ENCODE measurements at regions of chr10 and their contacts with region 1.

Region 1: DNA sequence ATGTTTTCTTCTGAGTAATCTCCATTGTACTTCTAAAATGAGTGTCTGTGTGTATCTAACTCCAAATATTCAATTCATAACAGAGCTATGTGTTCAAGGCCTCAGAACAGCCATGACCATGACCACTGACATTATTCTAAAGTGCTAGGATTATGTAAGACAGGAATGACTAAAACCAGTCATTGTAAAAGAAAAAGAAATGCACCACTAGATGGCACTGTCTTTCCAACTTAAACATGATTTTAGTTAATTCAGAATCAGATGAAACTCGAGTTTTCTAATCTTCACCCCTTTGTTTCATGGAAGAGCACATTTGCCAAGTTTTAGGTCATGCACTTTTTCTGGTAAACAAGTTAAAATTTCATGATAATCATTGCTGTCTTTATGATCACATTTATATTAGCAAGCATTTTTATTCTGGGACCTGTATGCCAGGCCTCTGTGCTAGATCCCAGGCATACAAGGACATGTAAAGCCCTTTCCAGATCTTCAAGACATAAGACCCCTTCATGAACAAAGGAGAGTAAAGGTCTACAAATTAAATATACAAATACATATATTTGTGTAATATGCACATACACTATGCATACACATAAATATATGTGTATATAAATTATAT is 26.1 kb upstream of the RSU1 start:
- DNase-seq: peak; percentile 75
- H3K4me3 Mint-ChIP-seq: no peak overlapping the region
- H3K27ac Mint-ChIP-seq: no peak overlapping the region
- H3K4me1 Mint-ChIP-seq: peaks cover 2% of the 10 kb centered on the region
- H3K27me3 Mint-ChIP-seq: peaks cover 11% of the 10 kb centered on the region

Region 2: GRCh38 chr10:16799621-16800020 is 43.7 kb before region 1 on chr10:
- intact Hi-C with region 1: no loop called
- DNase-seq: peak; percentile 58
- H3K4me3 Mint-ChIP-seq: no peak overlapping the region
- H3K27ac Mint-ChIP-seq: no peak overlapping the region
- H3K4me1 Mint-ChIP-seq: peaks cover 31% of the 10 kb centered on the region
- H3K27me3 Mint-ChIP-seq: no peaks in the 10 kb centered on the region

Region 3: DNA sequence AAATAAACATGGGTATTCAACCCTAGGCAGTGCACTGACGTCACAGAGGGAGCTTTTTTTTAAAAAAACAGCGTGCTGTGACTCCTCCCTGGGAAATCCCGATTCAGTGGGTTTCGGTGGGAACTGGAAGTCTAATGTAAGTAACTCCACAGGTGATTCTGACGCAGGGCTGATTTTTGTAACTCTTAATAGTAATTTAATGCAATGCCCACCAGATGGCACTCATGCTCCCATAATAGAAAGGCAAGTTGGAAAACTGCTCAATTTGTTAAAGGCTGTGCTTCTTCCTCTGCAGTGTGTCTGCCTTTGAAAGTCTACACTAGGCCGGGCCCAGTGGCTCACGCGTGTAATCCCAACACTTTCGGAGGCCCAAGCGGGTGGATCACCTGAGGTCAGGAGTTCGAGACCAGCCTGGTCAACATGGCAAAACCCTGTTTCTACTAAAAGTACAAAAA is 15.2 kb before region 1 on chr10:
- intact Hi-C with region 1: loop called (anchors 1 kb)
- DNase-seq: peak; percentile 89
- H3K4me3 Mint-ChIP-seq: no peak overlapping the region
- H3K27ac Mint-ChIP-seq: no peak overlapping the region
- H3K4me1 Mint-ChIP-seq: peaks cover 5% of the 10 kb centered on the region
- H3K27me3 Mint-ChIP-seq: peaks cover 7% of the 10 kb centered on the region

Region 4: DNA sequence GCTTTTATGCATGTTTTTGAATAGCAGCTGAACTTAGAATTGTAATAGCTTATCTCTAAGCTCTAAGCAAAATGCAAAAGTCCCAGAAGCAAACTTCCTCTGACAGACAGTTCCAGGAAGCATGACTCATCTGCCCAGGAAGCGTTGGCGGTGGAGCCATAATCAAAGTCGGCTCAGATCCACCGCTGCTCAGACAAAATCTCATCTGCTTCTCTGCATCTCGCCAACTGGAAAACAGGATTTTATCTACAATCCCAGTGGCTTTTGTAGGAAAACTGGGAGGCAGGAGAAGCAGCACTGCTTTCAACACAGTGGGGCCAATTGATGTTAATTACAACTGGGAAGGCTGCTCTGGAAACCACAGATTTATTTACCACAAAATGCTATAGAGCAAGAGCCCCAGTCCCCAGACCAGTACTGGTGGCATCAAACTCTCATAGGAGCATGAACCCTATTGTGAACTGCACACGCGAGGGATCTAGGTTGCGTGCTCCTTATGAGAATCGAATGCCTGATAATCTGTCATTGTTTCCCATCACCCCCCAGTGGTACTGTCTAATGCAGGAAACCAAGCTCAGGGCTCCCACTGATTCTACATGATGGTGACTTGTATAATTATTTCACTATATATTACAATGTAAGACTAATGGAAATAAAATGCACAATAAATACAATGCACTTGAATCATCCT is 186.4 kb after region 1 on chr10:
- intact Hi-C with region 1: loop called (anchors 5 kb)
- DNase-seq: peak; percentile 92
- H3K4me3 Mint-ChIP-seq: peak overlapping the region; percentile 80
- H3K27ac Mint-ChIP-seq: peak overlapping the region; percentile 90
- H3K4me1 Mint-ChIP-seq: peaks cover 63% of the 10 kb centered on the region
- H3K27me3 Mint-ChIP-seq: peaks cover 2% of the 10 kb centered on the region

Region 5: GRCh38 chr10:17257466-17258321 is 414.3 kb after region 1 on chr10:
- intact Hi-C with region 1: loop called (anchors 1 kb)
- DNase-seq: peak; percentile 89
- H3K4me3 Mint-ChIP-seq: peak overlapping the region; percentile 50
- H3K27ac Mint-ChIP-seq: no peak overlapping the region
- H3K4me1 Mint-ChIP-seq: peaks cover 11% of the 10 kb centered on the region
- H3K27me3 Mint-ChIP-seq: peaks cover 6% of the 10 kb centered on the region

Region 6: DNA sequence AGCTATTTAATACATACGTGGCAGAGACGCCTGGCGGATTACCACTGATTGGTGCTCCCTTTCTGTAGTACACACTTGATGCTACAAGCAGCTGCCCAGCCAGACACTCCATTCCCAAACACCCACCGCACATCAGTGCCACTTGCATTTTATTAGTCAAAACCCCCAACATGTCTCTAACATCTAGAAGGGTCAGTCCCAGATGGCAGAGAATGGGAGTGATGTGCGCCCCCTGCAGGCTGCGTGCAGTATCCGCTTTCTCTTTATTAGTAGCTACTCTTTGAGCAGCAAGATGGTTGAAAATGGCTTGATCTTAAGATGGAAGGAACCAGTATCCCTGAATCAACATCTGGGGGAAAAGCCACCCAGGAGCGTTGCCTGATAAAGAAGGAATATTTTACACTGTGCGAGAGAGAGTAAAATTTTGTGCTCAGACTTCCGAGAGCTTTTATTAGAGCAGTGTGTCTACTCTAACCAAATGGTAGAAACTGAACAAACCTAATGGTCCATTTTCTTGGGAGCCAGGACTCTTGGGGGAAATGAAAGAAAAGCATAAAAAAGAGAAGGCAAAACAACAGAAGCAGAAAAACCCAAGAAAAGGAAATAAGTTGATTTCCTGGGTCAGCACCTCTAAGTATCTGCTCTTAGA is 532.7 kb after region 1 on chr10:
- intact Hi-C with region 1: loop called (anchors 5 kb)
- DNase-seq: peak; percentile 73
- H3K4me3 Mint-ChIP-seq: no peak overlapping the region
- H3K27ac Mint-ChIP-seq: no peak overlapping the region
- H3K4me1 Mint-ChIP-seq: no peaks in the 10 kb centered on the region
- H3K27me3 Mint-ChIP-seq: peaks cover 2% of the 10 kb centered on the region

Region 7: GRCh38 chr10:17430647-17431355 is 587.4 kb after region 1 on chr10:
- intact Hi-C with region 1: loop called (anchors 5 kb)
- DNase-seq: peak; percentile 87
- H3K4me3 Mint-ChIP-seq: no peak overlapping the region
- H3K27ac Mint-ChIP-seq: no peak overlapping the region
- H3K4me1 Mint-ChIP-seq: peaks cover 51% of the 10 kb centered on the region
- H3K27me3 Mint-ChIP-seq: peaks cover 18% of the 10 kb centered on the region